ENCODE measurements at regions of chr15 and their contacts with region 1.

Region 1: DNA sequence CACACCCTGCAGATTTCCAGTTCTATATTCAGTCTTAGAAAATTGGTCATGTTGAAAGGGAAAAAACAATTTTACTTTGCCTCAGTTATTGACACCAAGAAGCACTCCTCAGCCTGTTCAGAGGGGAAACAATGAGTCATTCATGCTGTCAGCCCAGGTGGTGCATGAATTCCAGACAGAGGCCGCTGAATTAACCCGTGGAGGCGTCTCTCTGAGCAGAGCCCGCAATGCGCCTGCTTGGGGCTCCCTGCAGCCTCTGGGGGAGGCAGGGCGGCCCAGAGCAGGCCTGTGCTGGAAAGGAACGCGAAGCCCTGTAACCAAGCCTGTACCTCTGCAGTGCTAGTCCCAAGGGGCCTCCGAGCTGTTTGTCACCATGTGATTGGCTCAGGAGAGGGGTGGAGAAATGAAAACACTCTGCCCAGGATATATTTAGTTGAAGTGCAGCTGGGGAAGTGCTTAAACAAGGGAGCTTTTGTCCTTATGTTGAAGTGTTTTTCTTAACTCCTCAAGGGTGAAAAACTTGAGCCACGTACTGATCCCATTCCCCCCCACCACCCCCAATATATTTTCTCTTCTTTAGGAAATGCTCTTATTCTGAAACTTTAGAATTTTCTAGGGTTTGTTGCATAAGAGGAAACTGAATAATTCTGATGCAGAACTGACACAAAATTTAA is 68.3 kb upstream of the CHD2 start:
- DNase-seq: peak; percentile 96
- ATAC-seq: peak; percentile 97
- H3K4me3 Mint-ChIP-seq: peak overlapping the region; percentile 68
- H3K27ac Mint-ChIP-seq: peak overlapping the region; percentile 98
- H3K4me1 Mint-ChIP-seq: peaks cover 42% of the 10 kb centered on the region
- H3K27me3 Mint-ChIP-seq: no peaks in the 10 kb centered on the region

Region 2: GRCh38 chr15:92820236-92821021 is 11.4 kb before region 1 on chr15:
- CTCF ChIA-PET with region 1: interaction called, 48 read pairs
- DNase-seq: peak; percentile 89
- ATAC-seq: peak; percentile 89
- H3K4me3 Mint-ChIP-seq: peak overlapping the region; percentile 79
- H3K27ac Mint-ChIP-seq: peak overlapping the region; percentile 85
- H3K4me1 Mint-ChIP-seq: peaks cover 52% of the 10 kb centered on the region
- H3K27me3 Mint-ChIP-seq: no peaks in the 10 kb centered on the region

Measured in activated CD8-positive, alpha-beta memory T cell treated with anti-CD3 and anti-CD28 coated beads, Interleukin-2, amount 10 ng/mL, durations not matched to agents 7 days and 5 days (primary cell).